ENCODE measurements at regions of chr20 and their contacts with region 1.

Region 1: GRCh38 chr20:22312744-22313346 is 271.5 kb downstream of the FOXA2 start:
- DNase-seq: peak; percentile 51
- H3K4me3 ChIP-seq: no peak overlapping the region
- H3K27ac ChIP-seq: no peak overlapping the region
- H3K4me1 ChIP-seq: no peaks in the 10 kb centered on the region
- H3K27me3 ChIP-seq: peaks cover 3% of the 10 kb centered on the region
- CTCF ChIP-seq: peak; percentile 66 to 72

Region 2: DNA sequence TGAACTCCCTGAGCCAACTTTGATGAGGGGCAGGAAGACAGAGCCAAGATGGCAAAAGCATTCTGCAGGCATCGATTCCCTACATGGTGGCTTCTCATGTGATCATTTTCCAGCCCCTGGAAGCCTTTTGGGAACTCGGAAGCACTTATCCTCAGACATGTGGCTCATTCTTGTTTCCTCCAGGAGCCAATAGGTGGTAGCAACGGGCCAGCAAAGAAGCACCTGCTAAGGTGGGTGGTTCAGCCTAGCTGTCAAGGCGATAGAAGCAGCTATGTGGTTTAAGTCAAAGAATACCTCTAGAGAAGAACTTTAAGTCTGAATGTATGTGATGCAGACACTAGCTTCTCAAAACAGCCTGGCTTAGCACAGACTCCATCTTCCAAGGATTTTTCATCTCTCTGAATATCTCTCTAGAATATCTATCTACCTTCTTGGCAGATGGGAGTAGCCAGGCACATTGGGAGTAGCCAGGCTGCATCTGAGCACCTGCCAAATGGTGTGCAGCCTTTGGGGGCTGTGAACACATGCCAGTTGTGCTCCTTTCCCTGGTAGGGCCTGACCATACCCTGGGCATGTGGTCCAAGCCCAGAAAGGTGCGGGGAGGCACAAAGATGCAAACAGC is 672.2 kb before region 1 on chr20:
- CTCF ChIA-PET with region 1: no interaction called
- dilution Hi-C with region 1: no loop called
- in situ Hi-C with region 1: no loop called
- intact Hi-C with region 1: loop called (anchors 5 kb)
- DNase-seq: peak; percentile 21
- H3K4me3 ChIP-seq: no peak overlapping the region
- H3K27ac ChIP-seq: no peak overlapping the region
- H3K4me1 ChIP-seq: no peaks in the 10 kb centered on the region
- H3K27me3 ChIP-seq: no peaks in the 10 kb centered on the region
- CTCF ChIP-seq: peak; percentile 11 to 49

Region 3: DNA sequence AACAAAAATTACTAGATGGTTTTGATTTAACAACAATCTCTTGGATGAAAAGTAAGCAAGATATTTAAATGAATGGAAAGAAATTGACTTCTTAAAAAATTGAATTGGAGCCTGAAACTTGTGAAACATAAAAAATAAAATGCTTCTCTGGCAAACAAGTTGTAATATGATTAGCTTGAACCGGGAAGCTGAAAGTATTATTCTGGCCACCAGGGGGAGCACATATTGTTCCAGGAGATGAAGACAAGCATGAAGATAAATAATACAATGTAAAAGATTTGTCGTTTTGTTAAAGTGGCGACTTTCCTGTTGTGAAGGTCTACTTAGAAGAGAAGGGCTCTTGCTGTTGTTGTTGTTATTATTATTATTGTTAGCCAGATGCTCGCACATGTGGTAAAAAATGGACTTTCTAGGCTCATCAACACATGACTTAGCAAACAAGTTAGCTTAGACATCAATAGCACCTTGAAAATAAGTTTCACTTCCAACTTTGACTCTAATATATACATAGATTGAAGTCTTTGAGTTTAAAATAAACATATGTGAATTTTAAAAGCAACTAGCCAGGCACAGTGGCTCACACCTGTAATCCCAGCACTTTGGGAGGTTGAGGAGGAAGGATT is 593.1 kb before region 1 on chr20:
- CTCF ChIA-PET with region 1: no interaction called
- dilution Hi-C with region 1: no loop called
- in situ Hi-C with region 1: no loop called
- intact Hi-C with region 1: loop called (anchors 1 kb)
- DNase-seq: peak; percentile 33
- H3K4me3 ChIP-seq: no peak overlapping the region
- H3K27ac ChIP-seq: no peak overlapping the region
- H3K4me1 ChIP-seq: no peaks in the 10 kb centered on the region
- H3K27me3 ChIP-seq: peaks cover 12% of the 10 kb centered on the region
- CTCF ChIP-seq: peak; percentile 67 to 83

Region 4: DNA sequence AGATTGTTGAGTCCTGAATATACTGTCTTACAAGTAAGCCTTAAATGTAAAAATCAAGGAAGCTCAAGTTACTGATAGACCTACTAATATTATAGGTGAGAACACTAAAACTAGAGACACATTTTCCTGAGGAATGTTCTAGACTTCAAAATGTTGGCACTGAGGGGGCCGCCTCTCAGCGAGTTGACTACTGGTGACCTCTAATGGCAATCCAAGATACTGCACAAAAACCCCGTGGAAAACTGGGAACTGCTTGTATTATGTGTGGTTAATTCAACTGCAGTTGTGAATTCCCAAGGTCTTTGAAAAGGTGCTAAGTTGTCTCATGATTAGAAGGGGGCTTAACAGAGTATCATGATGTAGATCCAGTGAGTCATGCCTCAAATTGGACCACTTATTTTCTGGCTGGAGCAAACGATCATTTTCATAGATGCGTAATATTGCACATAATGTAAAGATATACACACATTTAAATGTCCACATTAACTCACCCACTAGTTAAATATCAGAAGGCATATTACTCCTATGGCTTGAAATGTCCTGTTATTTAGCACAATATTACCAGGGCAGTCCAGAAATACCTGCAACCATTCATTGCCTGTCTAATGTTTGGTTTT is 64.7 kb before region 1 on chr20:
- CTCF ChIA-PET with region 1: no interaction called
- dilution Hi-C with region 1: no loop called
- in situ Hi-C with region 1: no loop called
- intact Hi-C with region 1: loop called (anchors 5 kb)
- DNase-seq: no peak
- H3K4me3 ChIP-seq: no peak overlapping the region
- H3K27ac ChIP-seq: no peak overlapping the region
- H3K4me1 ChIP-seq: no peaks in the 10 kb centered on the region
- H3K27me3 ChIP-seq: no peaks in the 10 kb centered on the region
- CTCF ChIP-seq: peak; percentile 39 to 70

Region 5: GRCh38 chr20:22274330-22274729 is 38.5 kb before region 1 on chr20:
- CTCF ChIA-PET with region 1: no interaction called
- dilution Hi-C with region 1: no loop called
- in situ Hi-C with region 1: no loop called
- intact Hi-C with region 1: no loop called
- DNase-seq: no peak
- H3K4me3 ChIP-seq: no peak overlapping the region
- H3K27ac ChIP-seq: no peak overlapping the region
- H3K4me1 ChIP-seq: no peaks in the 10 kb centered on the region
- H3K27me3 ChIP-seq: no peaks in the 10 kb centered on the region
- CTCF ChIP-seq: no peak

Region 6: GRCh38 chr20:22302039-22302438 is 10.8 kb before region 1 on chr20:
- CTCF ChIA-PET with region 1: interaction called, 16 read pairs
- dilution Hi-C with region 1: no loop called
- in situ Hi-C with region 1: no loop called
- intact Hi-C with region 1: no loop called
- DNase-seq: no peak
- H3K4me3 ChIP-seq: no peak overlapping the region
- H3K27ac ChIP-seq: no peak overlapping the region
- H3K4me1 ChIP-seq: peaks cover 13% of the 10 kb centered on the region
- H3K27me3 ChIP-seq: no peaks in the 10 kb centered on the region
- CTCF ChIP-seq: no peak

Measured in mammary epithelial cell (primary cell).